Natural killer cell (primary cell): ENCODE measurements at regions of chr2 and their contacts with region 1.

Region 1: DNA sequence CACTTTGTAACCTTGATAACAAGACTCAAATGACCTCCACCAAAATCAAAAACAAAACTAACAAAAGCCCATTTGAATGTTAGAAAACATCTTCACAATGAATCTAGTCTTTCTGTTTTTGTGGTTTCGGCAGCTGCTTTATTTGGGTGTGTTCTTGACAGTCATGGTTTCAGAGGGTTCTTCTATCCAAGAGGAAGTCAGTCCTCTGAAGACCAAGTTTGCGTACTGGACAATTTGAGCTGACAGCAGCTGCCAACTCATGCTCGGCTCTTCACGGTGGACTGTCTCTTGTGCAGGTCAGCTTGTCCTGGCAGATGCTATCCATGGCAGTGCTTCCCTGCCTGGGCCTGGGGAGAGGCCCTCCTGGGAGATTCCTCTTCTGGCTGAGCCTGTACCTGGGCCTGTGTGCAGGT is 91.0 kb downstream of the TMEM17 start:
- DNase-seq: no peak
- ATAC-seq: peak; percentile 45 to 69 (median 48)
- H3K4me3 ChIP-seq: no peak overlapping the region
- H3K4me3 Mint-ChIP-seq: peak overlapping the region; percentile 60
- H3K27ac ChIP-seq: no peak overlapping the region
- H3K27ac Mint-ChIP-seq: peak overlapping the region; percentile 85 to 86
- H3K4me1 ChIP-seq: peaks cover 5% of the 10 kb centered on the region
- H3K4me1 Mint-ChIP-seq: peaks cover 24 to 25% of the 10 kb centered on the region in 2 donors
- H3K27me3 ChIP-seq: no peaks in the 10 kb centered on the region
- H3K27me3 Mint-ChIP-seq: no peaks in the 10 kb centered on the region
- CTCF ChIP-seq: no peak

Region 2: DNA sequence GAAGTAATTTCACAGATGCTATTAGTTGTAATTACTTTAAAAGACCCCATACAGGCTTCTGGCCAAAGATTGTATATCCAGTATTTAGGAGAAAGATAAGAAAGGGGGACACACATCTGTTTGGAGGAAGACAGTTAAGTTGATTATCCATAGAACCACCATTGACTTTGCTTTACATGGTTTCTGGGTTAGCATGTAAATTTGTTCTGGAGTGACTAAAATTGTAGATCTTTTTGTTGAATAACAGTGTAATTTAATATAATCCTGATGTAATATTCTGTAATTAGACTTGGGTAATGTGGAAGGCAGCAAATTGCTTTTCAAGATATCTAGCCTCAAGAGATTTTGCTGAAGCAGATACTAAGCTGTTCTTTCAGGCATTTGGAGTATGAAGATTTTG is 492.3 kb before region 1 on chr2:
- intact Hi-C with region 1: loop called (anchors 1 kb)
- DNase-seq: no peak
- ATAC-seq: no peak
- H3K4me3 ChIP-seq: no peak overlapping the region
- H3K4me3 Mint-ChIP-seq: no peak overlapping the region
- H3K27ac ChIP-seq: no peak overlapping the region
- H3K27ac Mint-ChIP-seq: no peak overlapping the region
- H3K4me1 ChIP-seq: no peaks in the 10 kb centered on the region
- H3K4me1 Mint-ChIP-seq: peaks cover 0 to 5% of the 10 kb centered on the region in 2 donors
- H3K27me3 ChIP-seq: no peaks in the 10 kb centered on the region
- H3K27me3 Mint-ChIP-seq: no peaks in the 10 kb centered on the region
- CTCF ChIP-seq: no peak

Region 3: DNA sequence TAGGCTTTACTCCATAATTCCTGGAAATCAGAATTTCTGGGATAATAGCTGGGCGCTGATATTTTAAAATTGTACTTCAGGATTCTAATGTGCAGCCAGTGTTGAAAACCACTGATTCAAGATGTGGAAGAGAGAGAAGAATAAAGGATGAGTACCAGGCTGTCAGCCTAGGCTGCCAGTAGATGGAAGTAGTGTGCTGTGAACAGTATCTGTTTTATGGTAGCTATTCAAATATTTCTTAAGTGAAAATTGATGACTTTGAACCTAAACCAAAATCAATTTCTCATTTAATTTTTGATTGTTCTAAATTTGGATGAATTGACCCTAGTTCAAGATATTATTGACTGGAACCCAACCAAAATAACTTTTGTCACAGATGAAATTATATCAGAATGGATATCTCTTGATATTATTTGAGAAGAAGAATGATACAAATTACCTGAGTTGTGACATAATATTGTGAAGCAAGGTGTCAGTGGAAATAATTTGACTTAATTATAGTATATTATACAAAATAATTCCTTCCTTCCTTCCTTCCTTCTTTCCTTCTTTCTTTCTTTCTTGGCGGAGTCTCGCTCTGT is 421.5 kb before region 1 on chr2:
- intact Hi-C with region 1: loop called (anchors 1 kb)
- DNase-seq: peak in 1 of 2 donors; percentile 59
- ATAC-seq: peak in 2 of 3 donors; percentile 49 to 56
- H3K4me3 ChIP-seq: no peak overlapping the region
- H3K4me3 Mint-ChIP-seq: no peak overlapping the region
- H3K27ac ChIP-seq: no peak overlapping the region
- H3K27ac Mint-ChIP-seq: no peak overlapping the region
- H3K4me1 ChIP-seq: no peaks in the 10 kb centered on the region
- H3K4me1 Mint-ChIP-seq: peaks cover 0 to 7% of the 10 kb centered on the region in 2 donors
- H3K27me3 ChIP-seq: no peaks in the 10 kb centered on the region
- H3K27me3 Mint-ChIP-seq: no peaks in the 10 kb centered on the region
- CTCF ChIP-seq: peak; percentile 40

Region 4: GRCh38 chr2:62195421-62196277 is 219.4 kb before region 1 on chr2 and contains the start of gene B3GNT2:
- intact Hi-C with region 1: loop called (anchors 10 kb)
- DNase-seq: peak; percentile 80 to 91
- ATAC-seq: peak; percentile 80 to 91 (median 85)
- H3K4me3 ChIP-seq: peak within 1 kb of the TSS; percentile 100
- H3K4me3 Mint-ChIP-seq: peak within 1 kb of the TSS; percentile 95
- H3K27ac ChIP-seq: peak within 1 kb of the TSS; percentile 81
- H3K27ac Mint-ChIP-seq: peak within 1 kb of the TSS; percentile 88 to 94
- H3K4me1 ChIP-seq: peaks cover 28% of the 10 kb centered on the region
- H3K4me1 Mint-ChIP-seq: peaks cover 32 to 33% of the 10 kb centered on the region in 2 donors
- H3K27me3 ChIP-seq: no peaks in the 10 kb centered on the region
- H3K27me3 Mint-ChIP-seq: no peaks in the 10 kb centered on the region
- CTCF ChIP-seq: no peak
- total RNA-seq, gene B3GNT2: 51.9 to 68.0 (median 54.0) TPM

Region 5: GRCh38 chr2:62287899-62288880 is 126.8 kb before region 1 on chr2:
- intact Hi-C with region 1: no loop called
- DNase-seq: peak; percentile 38 to 79
- ATAC-seq: peak; percentile 56 to 82 (median 66)
- H3K4me3 ChIP-seq: no peak overlapping the region
- H3K4me3 Mint-ChIP-seq: no peak overlapping the region
- H3K27ac ChIP-seq: no peak overlapping the region
- H3K27ac Mint-ChIP-seq: peak overlapping the region in 1 of 2 donors; percentile 60
- H3K4me1 ChIP-seq: peaks cover 15% of the 10 kb centered on the region
- H3K4me1 Mint-ChIP-seq: peaks cover 14 to 18% of the 10 kb centered on the region in 2 donors
- H3K27me3 ChIP-seq: no peaks in the 10 kb centered on the region
- H3K27me3 Mint-ChIP-seq: no peaks in the 10 kb centered on the region
- CTCF ChIP-seq: no peak

Region 6: GRCh38 chr2:62467475-62468321 is 52.7 kb after region 1 on chr2:
- intact Hi-C with region 1: no loop called
- DNase-seq: no peak
- ATAC-seq: no peak
- H3K4me3 ChIP-seq: no peak overlapping the region
- H3K4me3 Mint-ChIP-seq: no peak overlapping the region
- H3K27ac ChIP-seq: no peak overlapping the region
- H3K27ac Mint-ChIP-seq: no peak overlapping the region
- H3K4me1 ChIP-seq: no peaks in the 10 kb centered on the region
- H3K4me1 Mint-ChIP-seq: no peaks in the 10 kb centered on the region
- H3K27me3 ChIP-seq: no peaks in the 10 kb centered on the region
- H3K27me3 Mint-ChIP-seq: no peaks in the 10 kb centered on the region
- CTCF ChIP-seq: no peak

Region 7: GRCh38 chr2:62854600-62855514 is 439.8 kb after region 1 on chr2:
- intact Hi-C with region 1: no loop called
- DNase-seq: no peak
- ATAC-seq: no peak
- H3K4me3 ChIP-seq: no peak overlapping the region
- H3K4me3 Mint-ChIP-seq: no peak overlapping the region
- H3K27ac ChIP-seq: no peak overlapping the region
- H3K27ac Mint-ChIP-seq: no peak overlapping the region
- H3K4me1 ChIP-seq: no peaks in the 10 kb centered on the region
- H3K4me1 Mint-ChIP-seq: no peaks in the 10 kb centered on the region
- H3K27me3 ChIP-seq: no peaks in the 10 kb centered on the region
- H3K27me3 Mint-ChIP-seq: no peaks in the 10 kb centered on the region
- CTCF ChIP-seq: no peak